ENCODE measurements at regions of chr7 and their contacts with region 1.

Region 1: GRCh38 chr7:142782922-142783900 is 12.4 kb downstream of the PRSS2 start:
- DNase-seq: peak; percentile 84
- H3K4me3 Mint-ChIP-seq: peak overlapping the region; percentile 64
- H3K27ac Mint-ChIP-seq: peak overlapping the region; percentile 89
- H3K4me1 Mint-ChIP-seq: peaks cover 22% of the 10 kb centered on the region
- H3K27me3 Mint-ChIP-seq: no peaks in the 10 kb centered on the region

Region 2: DNA sequence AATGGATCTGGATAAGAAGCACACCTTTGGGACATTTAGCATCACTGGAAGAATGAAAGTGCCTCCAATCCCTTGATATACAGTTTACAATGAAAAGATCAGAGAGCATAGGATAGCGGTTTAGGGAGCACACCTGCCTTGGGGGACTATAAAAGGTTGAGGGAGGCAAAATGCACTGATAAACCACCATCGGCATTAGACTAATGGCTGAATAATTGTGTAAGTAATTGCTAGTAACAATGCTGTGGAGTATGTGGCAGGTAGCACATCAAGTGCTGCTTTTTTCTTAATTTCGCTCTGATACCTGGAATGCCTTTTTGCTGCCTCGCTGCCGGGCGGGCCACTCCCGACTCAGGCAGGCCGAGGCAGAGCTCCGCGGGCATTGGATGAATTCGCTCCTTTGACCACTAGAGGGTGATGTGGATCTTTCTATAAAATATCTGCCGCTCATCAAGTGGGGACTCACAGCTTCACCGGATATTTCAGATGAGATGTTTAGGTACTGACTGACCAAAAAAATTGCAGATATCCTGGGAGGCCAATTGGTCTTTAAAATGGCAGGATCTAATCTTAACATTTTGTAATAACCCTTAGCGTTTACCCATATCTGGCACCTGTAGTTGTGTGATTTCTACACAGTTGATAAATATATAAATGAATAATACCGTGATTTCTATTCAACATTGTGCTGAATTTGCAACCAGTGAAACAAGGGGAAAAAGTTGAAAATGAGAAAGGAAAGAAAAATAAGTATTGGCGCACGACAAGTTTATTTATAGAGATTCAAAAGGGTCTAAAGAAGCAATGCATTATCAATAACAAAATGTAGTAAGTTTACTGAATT is 150.7 kb before region 1 on chr7:
- CTCF ChIA-PET with region 1: interaction called, 40 read pairs
- POLR2A ChIA-PET with region 1: interaction called, 16 read pairs
- DNase-seq: peak; percentile 60
- H3K4me3 Mint-ChIP-seq: no peak overlapping the region
- H3K27ac Mint-ChIP-seq: peak overlapping the region; percentile 29
- H3K4me1 Mint-ChIP-seq: peaks cover 13% of the 10 kb centered on the region
- H3K27me3 Mint-ChIP-seq: peaks cover 15% of the 10 kb centered on the region

Region 3: DNA sequence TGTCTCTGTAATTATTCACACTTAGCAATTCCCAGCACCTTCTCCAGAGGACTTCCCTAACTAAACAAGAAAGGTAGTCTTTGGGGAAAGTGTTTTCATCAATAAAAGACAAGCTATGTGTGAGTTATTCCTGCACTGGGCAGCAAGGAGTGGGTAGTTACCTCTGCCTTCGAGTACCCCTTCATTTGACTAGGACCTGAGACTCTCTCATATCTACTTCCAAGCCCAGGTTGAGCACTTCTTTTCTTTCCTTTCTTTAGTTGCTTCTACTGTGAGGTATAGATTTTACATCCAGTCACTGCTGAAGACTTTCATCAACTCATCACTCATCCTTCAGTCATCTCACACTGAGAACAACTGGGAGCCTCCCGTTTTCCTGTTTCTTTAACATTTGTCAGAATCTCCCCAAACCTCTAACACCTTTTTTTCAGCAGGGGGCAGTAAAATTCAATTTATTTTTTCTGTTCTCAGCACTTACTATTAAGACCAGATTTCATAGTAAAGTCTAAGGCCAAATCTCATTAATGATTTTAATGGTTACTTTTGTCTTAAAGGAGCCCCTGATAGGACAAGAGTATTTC is 114.0 kb before region 1 on chr7:
- CTCF ChIA-PET with region 1: interaction called, 36 read pairs
- POLR2A ChIA-PET with region 1: interaction called, 4 read pairs
- DNase-seq: no peak
- H3K4me3 Mint-ChIP-seq: no peak overlapping the region
- H3K27ac Mint-ChIP-seq: peak overlapping the region; percentile 33
- H3K4me1 Mint-ChIP-seq: peaks cover 34% of the 10 kb centered on the region
- H3K27me3 Mint-ChIP-seq: no peaks in the 10 kb centered on the region

Region 4: DNA sequence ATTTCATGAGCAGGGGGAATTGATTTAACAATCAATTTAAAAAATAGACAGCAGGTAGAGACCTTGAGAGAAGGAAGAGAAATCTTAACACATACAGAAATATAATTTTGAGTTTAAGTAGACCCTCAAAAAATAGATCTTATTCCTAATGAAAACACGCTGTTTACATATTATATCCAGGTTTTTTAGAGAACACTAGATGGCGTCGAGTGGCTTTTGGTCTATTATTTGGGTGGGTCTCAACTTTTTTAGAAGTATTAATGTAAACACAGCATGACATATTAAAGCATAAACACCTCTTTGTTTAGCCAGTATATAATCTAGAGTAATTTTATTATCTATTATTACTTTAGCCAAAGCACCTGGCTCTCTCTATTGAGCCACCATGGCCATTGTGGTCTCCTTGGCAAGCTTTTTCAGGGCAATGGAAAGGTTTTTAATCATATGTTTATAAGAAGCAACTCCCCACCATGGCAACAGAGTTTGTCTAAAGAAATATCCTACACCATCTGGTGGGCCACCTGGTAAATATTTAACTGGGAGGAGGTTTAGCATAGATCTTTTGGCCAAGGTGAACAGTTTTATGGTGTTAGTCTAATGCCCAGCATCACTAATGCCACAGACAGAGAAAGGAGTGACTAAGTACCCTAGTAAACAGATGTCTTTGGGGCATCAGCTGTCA is 93.6 kb before region 1 on chr7:
- CTCF ChIA-PET with region 1: interaction called, 14 read pairs
- POLR2A ChIA-PET with region 1: no interaction called
- DNase-seq: no peak
- H3K4me3 Mint-ChIP-seq: no peak overlapping the region
- H3K27ac Mint-ChIP-seq: peak overlapping the region; percentile 77
- H3K4me1 Mint-ChIP-seq: peaks cover 41% of the 10 kb centered on the region
- H3K27me3 Mint-ChIP-seq: no peaks in the 10 kb centered on the region

Region 5: GRCh38 chr7:142711746-142712619 is 71.2 kb before region 1 on chr7:
- CTCF ChIA-PET with region 1: interaction called, 47 read pairs
- POLR2A ChIA-PET with region 1: interaction called, 44 read pairs
- DNase-seq: peak; percentile 53
- H3K4me3 Mint-ChIP-seq: peak overlapping the region; percentile 68
- H3K27ac Mint-ChIP-seq: peak overlapping the region; percentile 89
- H3K4me1 Mint-ChIP-seq: peaks cover 83% of the 10 kb centered on the region
- H3K27me3 Mint-ChIP-seq: no peaks in the 10 kb centered on the region

Region 6: GRCh38 chr7:142880876-142881505 is 97.8 kb after region 1 on chr7:
- CTCF ChIA-PET with region 1: no interaction called
- POLR2A ChIA-PET with region 1: no interaction called
- DNase-seq: peak; percentile 50
- H3K4me3 Mint-ChIP-seq: no peak overlapping the region
- H3K27ac Mint-ChIP-seq: no peak overlapping the region
- H3K4me1 Mint-ChIP-seq: no peaks in the 10 kb centered on the region
- H3K27me3 Mint-ChIP-seq: peaks cover 18% of the 10 kb centered on the region

Measured in activated CD4-positive, alpha-beta memory T cell treated with anti-CD3 and anti-CD28 coated beads, Interleukin-2, amount 10 ng/mL, durations not matched to agents 7 days and 5 days (primary cell).